ENCODE measurements at regions of chr1 and their contacts with region 1.

Region 1: DNA sequence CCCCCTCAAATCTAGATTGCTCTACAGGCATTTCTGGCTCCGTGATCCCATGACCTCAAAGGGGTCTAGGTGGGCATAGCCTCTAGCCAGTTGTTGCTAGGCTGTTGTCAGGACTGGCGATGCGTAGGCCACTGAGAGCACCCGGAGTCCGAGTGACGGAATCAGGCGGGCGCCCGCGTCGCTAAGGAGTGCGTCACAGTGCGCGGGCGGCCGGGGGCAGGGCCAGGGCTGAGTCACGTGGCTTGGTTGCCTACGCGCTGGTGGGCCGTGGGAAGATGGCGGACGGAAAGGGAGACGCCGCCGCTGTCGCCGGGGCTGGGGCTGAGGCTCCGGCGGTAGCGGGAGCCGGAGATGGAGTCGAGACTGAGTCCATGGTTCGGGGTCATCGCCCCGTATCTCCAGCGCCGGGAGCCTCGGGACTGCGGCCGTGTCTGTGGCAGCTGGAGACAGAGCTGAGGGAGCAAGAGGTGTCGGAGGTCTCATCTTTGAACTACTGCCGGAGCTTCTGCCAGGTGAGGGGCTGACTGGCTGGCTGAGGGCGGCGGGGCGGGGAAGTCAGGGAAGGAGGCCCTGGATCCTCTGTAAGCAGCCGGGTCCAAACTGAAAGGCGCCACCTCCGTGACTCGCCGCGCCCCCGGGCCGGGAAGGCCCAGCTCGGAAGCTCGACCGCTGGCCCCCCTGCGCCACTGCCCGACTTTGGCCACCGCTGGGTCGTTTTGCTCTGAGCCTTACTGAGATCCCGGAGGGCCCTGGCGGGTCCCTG is at the start of gene RLF:
- DNase-seq: peak; percentile 97 to 99
- ATAC-seq: peak; percentile 100
- H3K4me3 ChIP-seq: peak within 1 kb of the TSS; percentile 48 to 94
- H3K27ac ChIP-seq: peak within 1 kb of the TSS; percentile 78 to 94
- H3K4me1 ChIP-seq: peaks cover 2 to 6% of the 10 kb centered on the region in 2 donors
- H3K27me3 ChIP-seq: no peaks in the 10 kb centered on the region
- total RNA-seq, gene RLF: 20.0 to 25.1 TPM

Region 2: DNA sequence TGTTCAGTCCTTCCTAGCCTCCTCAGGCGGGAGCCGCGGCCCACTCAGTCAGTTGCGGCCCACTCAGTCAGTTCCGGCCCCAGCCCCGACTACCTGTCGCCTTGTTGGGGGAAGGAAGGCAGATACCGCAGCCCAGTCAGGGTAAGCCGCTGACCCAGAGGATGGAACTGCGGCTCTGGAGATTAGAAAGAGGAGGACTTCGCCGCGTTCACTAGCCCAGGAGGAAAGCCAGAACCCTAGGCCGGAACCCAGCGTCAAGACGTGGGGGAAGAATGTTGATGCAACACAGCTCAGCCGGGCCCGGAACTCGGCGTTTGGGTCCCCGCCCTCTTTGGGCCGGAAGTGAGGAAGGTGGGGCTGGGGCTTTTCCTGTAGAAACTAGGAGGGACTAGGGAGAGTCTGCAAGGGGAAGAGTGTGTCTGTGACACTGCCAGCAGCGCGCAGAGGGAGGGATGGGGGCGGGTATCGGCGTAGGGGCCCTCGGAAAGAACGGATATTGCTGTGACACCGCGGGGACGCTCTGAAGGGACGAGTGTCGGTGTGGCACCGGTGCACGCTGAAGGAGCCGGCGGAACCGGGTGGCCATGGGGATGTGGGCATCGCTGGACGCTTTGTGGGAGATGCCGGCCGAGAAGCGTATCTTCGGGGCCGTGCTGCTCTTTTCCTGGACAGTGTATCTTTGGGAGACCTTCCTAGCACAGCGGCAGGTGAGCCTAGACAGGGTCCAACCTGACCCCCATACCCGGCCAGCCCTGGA is 96.6 kb after region 1 on chr1 and contains the start of gene ZMPSTE24:
- intact Hi-C with region 1: loop called (anchors 5 kb)
- DNase-seq: peak; percentile 97 to 98
- ATAC-seq: peak; percentile 100
- H3K4me3 ChIP-seq: peak within 1 kb of the TSS; percentile 82 to 88
- H3K27ac ChIP-seq: peak within 1 kb of the TSS; percentile 51 to 98
- H3K4me1 ChIP-seq: peaks cover 0 to 4% of the 10 kb centered on the region in 2 donors
- H3K27me3 ChIP-seq: no peaks in the 10 kb centered on the region
- total RNA-seq, gene ZMPSTE24: 51.1 to 56.5 TPM

Region 3: GRCh38 chr1:40264354-40264781 is 103.1 kb after region 1 on chr1:
- intact Hi-C with region 1: loop called (anchors 5 kb)
- DNase-seq: no peak
- ATAC-seq: peak; percentile 52
- H3K4me3 ChIP-seq: no peak overlapping the region
- H3K27ac ChIP-seq: peak overlapping the region; percentile 72 to 82
- H3K4me1 ChIP-seq: peaks cover 2 to 7% of the 10 kb centered on the region in 2 donors
- H3K27me3 ChIP-seq: no peaks in the 10 kb centered on the region